PC-3 (cell line): ENCODE measurements at regions of chr10 and their contacts with region 1.

Region 1: DNA sequence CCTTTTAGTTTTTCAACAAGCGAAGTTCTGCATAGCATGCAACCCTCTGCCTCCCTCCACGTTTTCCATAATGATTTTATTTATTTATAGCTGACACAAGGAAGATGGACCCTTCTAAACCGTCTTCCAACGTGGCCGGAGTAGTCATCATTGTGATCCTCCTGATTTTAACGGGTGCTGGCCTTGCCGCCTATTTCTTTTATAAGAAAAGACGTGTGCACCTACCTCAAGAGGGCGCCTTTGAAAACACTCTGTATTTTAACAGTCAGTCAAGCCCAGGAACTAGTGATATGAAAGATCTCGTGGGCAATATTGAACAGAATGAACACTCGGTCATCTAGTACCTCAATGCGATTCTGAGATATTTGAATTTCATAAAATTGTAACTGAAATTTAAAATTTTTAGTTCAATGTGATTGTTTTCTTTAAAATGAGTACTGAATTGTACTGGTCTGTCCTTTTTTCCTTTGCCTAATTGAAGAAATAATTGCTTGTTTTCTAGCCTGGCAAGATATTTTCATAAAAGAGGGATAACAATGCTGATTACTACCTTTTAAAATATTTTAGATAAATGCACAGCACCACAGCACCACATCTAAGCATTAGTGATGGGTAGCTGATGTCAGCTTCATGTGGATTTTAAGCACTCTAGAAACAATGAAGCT is 41.5 kb upstream of the SLC39A12 start:
- DNase-seq: peak; percentile 51
- ATAC-seq: peak; percentile 40
- H3K4me3 ChIP-seq: no peak overlapping the region
- H3K27ac ChIP-seq: no peak overlapping the region
- H3K4me1 ChIP-seq: peaks cover 6% of the 10 kb centered on the region; the same call in 1 of the 2 replicates
- H3K27me3 ChIP-seq: no peaks in the 10 kb centered on the region
- CTCF ChIP-seq: peak; percentile 63

Region 2: DNA sequence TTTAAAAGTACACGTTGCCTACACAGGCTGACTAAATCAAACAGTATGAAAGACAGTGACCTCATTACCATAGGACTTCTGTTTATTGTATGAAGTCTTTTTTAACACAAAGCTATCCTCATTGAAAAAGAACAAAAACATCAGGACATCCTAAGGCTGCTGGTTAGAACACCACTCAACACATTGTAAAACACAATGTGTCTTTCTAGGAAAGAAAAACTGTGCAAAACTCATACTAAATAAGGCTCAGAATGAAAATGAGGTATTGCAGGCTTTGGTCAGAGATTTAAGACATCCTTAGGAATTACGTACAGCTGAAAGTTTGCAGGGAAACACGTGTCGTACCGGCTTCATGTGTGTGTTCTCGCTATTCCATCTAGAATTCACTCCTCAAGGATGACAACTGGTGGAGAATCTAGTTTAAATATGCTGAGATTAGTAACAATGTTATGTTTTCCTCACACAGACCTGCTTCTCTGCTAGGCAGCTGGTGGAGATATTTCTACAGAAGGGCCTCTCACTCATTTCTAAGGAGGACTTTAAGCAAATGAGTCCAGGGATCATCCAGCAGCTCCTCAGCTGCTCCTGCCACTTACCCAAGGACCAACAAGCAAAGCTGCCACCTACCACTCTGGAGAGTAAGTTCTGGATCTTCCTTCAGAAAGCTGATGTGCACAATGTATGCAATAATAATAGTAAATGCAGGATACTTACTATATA is 70.7 kb after region 1 on chr10:
- CTCF ChIA-PET with region 1: no interaction called
- POLR2A ChIA-PET with region 1: no interaction called
- intact Hi-C with region 1: no loop called
- DNase-seq: no peak
- ATAC-seq: no peak
- H3K4me3 ChIP-seq: no peak overlapping the region
- H3K27ac ChIP-seq: no peak overlapping the region
- H3K4me1 ChIP-seq: peaks cover 19% of the 10 kb centered on the region
- H3K27me3 ChIP-seq: no peaks in the 10 kb centered on the region
- CTCF ChIP-seq: no peak

Region 3: DNA sequence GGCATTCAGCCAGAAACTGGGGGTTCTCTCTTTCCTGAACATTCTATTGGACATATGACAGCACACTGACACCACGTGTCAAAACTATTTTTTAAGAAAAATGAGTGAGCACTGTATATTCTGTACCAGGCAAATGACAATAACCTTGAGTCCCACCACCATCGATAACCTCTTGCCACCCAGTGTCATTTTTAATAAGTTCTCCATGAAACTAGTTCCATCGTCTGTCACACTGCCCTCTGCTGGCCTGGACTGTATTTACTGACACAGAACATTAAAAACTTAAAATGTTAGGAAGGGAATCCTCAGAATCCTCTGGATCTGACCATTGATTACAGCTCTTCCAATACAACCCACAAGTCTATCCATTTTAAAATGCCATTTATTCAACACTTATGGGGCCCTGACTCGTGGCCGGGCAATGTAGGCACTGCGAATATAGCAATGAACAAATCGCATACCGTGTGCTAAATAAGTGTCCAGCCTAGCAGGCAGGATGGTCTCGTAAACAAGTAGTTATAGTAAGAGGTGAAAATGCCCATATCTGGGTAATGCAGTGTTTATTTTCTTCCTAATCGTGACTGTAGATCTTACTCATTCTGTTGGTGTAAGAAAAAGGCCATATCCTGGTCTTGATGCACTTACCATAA is 194.1 kb after region 1 on chr10:
- CTCF ChIA-PET with region 1: no interaction called
- POLR2A ChIA-PET with region 1: no interaction called
- intact Hi-C with region 1: loop called (anchors 1 kb)
- DNase-seq: peak; percentile 52
- ATAC-seq: no peak
- H3K4me3 ChIP-seq: no peak overlapping the region
- H3K27ac ChIP-seq: no peak overlapping the region
- H3K4me1 ChIP-seq: no peaks in the 10 kb centered on the region
- H3K27me3 ChIP-seq: no peaks in the 10 kb centered on the region
- CTCF ChIP-seq: peak; percentile 71

Region 4: GRCh38 chr10:18214691-18215563 is 304.7 kb after region 1 on chr10:
- CTCF ChIA-PET with region 1: no interaction called
- POLR2A ChIA-PET with region 1: no interaction called
- intact Hi-C with region 1: loop called (anchors 5 kb)
- DNase-seq: peak; percentile 50
- ATAC-seq: peak; percentile 46; the same call in 1 of the 2 replicates
- H3K4me3 ChIP-seq: no peak overlapping the region
- H3K27ac ChIP-seq: no peak overlapping the region
- H3K4me1 ChIP-seq: no peaks in the 10 kb centered on the region
- H3K27me3 ChIP-seq: no peaks in the 10 kb centered on the region
- CTCF ChIP-seq: peak; percentile 73